ENCODE measurements at regions of chr6 and their contacts with region 1.

Region 1: DNA sequence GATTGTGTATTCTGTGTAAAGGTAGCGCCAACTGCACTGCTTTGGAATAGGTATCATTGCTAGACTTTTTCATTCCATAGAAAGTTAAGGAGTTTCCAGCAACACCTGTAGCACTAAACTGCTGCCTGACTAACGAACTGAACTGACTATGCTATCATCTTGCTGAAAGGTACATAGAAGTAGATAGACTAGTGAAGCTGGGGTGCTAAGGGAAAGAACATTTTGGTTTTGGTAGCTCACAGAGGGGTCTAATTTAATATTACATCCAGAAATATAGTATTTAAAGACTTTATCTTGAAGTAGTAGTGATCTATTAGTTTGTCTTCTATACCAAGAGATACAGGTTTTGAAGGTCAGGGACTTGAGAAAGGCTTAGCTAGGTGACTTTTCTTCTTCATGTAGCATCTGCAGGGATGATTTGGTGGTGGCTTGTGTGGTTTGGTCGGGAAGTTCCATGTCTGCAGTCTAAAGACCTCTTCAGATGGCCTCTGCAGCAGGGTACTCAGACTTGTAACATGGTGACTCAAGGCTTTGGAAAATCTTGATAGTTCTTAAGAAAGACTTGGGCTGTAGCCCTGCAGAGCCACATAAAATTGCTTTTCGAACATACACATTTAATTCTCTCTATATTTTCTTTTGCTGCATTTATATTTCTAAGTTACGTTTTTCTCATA is 10.2 kb downstream of the SENP6 start:
- DNase-seq: no peak
- ATAC-seq: peak; percentile 46
- H3K4me3 ChIP-seq: 0 out of 2 replicates have a peak overlapping the region, but pooled peaks have one; percentile 45
- H3K27ac ChIP-seq: peak overlapping the region; percentile 20; the same call in 1 of the 2 replicates
- H3K4me1 ChIP-seq: peaks cover 34% of the 10 kb centered on the region
- H3K27me3 ChIP-seq: no peaks in the 10 kb centered on the region
- CTCF ChIP-seq: no peak
- EP300 ChIP-seq: no peak
- POLR2A ChIP-seq: no peak
- RAD21 ChIP-seq: no peak

Region 2: GRCh38 chr6:75601304-75602245 is 10.3 kb before region 1 on chr6 and contains the start of gene SENP6:
- CTCF ChIA-PET with region 1: interaction called, 3 read pairs
- POLR2A ChIA-PET with region 1: interaction called, 22 read pairs
- RAD21 ChIA-PET with region 1: interaction called, 4 read pairs
- SMC1A ChIA-PET with region 1: interaction called, 6 read pairs
- in situ Hi-C with region 1: no loop called
- intact Hi-C with region 1: no loop called
- DNase-seq: no peak
- ATAC-seq: peak; percentile 83
- H3K4me3 ChIP-seq: peak within 1 kb of the TSS; percentile 86
- H3K27ac ChIP-seq: peak within 1 kb of the TSS; percentile 89
- H3K4me1 ChIP-seq: no peaks in the 10 kb centered on the region
- H3K27me3 ChIP-seq: no peaks in the 10 kb centered on the region
- CTCF ChIP-seq: no peak
- EP300 ChIP-seq: no peak
- POLR2A ChIP-seq: peak; percentile 96
- RAD21 ChIP-seq: no peak
- polyA plus RNA-seq, gene SENP6: 10.7 to 17.2 TPM